ENCODE measurements at regions of chr10 and their contacts with region 1.

Region 1: GRCh38 chr10:97416565-97416964 is 9.4 kb upstream of the PGAM1 start:
- DNase-seq: no peak
- ATAC-seq: no peak
- H3K4me3 Mint-ChIP-seq: peak overlapping the region in 9 of 10 donors; percentile 44 to 66 (median 53)
- H3K27ac Mint-ChIP-seq: peak overlapping the region; percentile 87 to 99 (median 92)
- H3K4me1 Mint-ChIP-seq: peaks cover 26 to 63% (median 59%) of the 10 kb centered on the region in 4 donors
- H3K27me3 Mint-ChIP-seq: no peaks in the 10 kb centered on the region

Region 2: DNA sequence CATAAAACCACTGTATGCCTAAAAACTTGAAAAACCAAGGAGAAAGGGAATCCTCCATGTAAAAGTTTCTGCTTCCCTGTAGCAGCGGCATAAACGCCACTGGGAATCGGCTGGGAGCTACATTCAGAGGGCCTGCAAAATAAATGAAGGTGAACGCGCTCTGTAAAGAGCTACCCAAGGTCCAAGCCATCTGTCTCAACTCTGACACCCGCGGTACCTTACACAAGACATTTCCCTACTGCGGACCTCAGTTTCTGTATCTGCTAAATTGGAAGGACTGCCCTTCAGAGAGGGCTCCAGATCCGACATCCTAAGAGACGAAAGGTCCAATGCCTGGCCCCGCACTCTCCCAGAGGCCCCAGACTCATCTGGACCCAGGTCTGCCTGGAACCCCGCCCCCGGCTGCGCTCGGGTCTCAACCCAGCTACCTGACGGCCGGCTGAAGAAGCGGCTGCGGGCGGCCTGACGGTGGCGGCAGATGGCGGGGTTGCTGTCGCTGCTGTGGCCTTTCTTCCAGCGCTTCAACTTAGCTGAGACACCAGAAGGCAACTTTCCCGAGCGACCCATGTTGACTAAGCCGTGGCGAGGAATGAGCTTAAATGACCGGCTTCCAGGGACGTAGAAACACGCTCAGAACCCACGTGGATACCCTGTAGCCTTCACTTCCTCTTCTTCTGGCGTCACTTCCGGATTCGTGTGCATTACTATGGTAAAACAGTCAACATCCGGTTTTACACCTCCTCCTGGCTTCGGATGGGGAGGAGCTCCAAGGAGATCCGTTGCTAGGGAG is 15.7 kb before region 1 on chr10 and contains the start of gene RRP12:
- POLR2A ChIA-PET with region 1: interaction called, 14 read pairs
- DNase-seq: peak; percentile 48 to 96 (median 87)
- ATAC-seq: peak; percentile 92 to 94
- H3K4me3 Mint-ChIP-seq: peak within 1 kb of the TSS; percentile 93 to 98 (median 96)
- H3K27ac Mint-ChIP-seq: peak within 1 kb of the TSS; percentile 69 to 100 (median 99)
- H3K4me1 Mint-ChIP-seq: peaks cover 0 to 22% (median 17%) of the 10 kb centered on the region in 4 donors
- H3K27me3 Mint-ChIP-seq: no peaks in the 10 kb centered on the region
- polyA plus RNA-seq, gene RRP12: 8.0 to 17.3 (median 8.3) TPM

Region 3: DNA sequence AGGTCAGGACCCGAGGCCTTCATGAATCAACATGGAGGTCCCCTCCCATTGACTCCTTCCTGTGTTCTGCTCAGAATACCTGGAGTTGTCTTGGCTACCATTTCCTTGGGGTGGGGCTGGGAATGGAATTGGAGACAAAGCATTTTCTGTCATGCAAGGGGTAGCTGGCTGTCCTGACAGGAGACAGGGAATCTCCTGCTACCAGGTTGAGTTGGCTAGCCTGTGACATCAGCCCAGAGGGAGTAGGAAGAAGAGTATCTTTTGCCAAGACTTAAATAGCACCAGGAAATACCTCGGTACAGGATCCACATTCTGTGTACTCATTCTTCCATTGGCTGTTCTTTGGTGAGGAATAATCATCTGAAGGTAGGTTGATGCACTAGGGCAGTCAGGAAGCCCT is 34.3 kb after region 1 on chr10:
- POLR2A ChIA-PET with region 1: no interaction called
- DNase-seq: no peak
- ATAC-seq: no peak
- H3K4me3 Mint-ChIP-seq: no peak overlapping the region
- H3K27ac Mint-ChIP-seq: peak overlapping the region in 9 of 10 donors; percentile 1 to 99 (median 62)
- H3K4me1 Mint-ChIP-seq: peaks cover 21 to 65% (median 51%) of the 10 kb centered on the region in 4 donors
- H3K27me3 Mint-ChIP-seq: no peaks in the 10 kb centered on the region

Region 4: DNA sequence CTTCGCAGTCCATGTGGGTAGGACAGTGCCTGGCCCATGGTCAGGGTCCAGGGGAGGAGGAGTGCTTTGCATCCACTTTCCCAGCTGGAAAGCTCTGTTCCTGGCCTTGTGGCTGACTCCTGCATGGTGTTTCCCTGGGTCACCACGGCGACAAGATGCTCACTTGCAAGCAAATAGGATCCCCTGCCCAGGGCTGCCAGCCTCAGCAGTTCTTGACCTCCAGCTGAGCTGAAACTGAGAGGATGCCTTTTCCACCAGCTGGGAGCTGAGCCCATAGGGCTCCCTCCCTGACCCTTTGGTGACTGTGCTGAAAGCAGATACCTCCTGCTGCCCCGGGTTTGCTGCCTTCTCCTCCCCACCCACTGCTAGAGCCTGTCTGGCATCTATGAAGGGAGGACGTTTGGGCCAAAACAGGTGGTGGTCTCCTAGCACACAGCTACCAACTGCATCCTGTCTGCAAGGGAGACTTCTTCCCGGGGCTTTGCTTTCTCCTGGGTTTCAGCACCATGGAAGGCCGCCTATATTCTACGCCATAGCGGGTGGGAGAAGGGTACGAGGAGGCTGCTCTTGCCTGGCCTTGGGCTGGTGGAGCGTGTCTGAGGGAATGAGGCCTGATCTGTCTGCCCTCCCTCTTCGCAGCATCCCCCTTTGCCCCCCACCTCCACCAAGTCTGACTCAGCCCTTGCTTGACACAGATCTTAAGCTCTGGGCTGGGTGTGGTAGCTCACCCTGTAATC is 116.5 kb after region 1 on chr10:
- POLR2A ChIA-PET with region 1: no interaction called
- DNase-seq: no peak
- ATAC-seq: no peak
- H3K4me3 Mint-ChIP-seq: no peak overlapping the region
- H3K27ac Mint-ChIP-seq: no peak overlapping the region
- H3K4me1 Mint-ChIP-seq: peaks cover 0 to 3% (median 0%) of the 10 kb centered on the region in 4 donors
- H3K27me3 Mint-ChIP-seq: no peaks in the 10 kb centered on the region